ENCODE measurements at regions of chr5 and their contacts with region 1.

Region 1: GRCh38 chr5:150398722-150399523 is 13.8 kb downstream of the CD74 start:
- DNase-seq: peak; percentile 34
- H3K4me3 Mint-ChIP-seq: no peak overlapping the region
- H3K27ac Mint-ChIP-seq: no peak overlapping the region
- H3K4me1 Mint-ChIP-seq: no peaks in the 10 kb centered on the region
- H3K27me3 Mint-ChIP-seq: no peaks in the 10 kb centered on the region

Region 2: DNA sequence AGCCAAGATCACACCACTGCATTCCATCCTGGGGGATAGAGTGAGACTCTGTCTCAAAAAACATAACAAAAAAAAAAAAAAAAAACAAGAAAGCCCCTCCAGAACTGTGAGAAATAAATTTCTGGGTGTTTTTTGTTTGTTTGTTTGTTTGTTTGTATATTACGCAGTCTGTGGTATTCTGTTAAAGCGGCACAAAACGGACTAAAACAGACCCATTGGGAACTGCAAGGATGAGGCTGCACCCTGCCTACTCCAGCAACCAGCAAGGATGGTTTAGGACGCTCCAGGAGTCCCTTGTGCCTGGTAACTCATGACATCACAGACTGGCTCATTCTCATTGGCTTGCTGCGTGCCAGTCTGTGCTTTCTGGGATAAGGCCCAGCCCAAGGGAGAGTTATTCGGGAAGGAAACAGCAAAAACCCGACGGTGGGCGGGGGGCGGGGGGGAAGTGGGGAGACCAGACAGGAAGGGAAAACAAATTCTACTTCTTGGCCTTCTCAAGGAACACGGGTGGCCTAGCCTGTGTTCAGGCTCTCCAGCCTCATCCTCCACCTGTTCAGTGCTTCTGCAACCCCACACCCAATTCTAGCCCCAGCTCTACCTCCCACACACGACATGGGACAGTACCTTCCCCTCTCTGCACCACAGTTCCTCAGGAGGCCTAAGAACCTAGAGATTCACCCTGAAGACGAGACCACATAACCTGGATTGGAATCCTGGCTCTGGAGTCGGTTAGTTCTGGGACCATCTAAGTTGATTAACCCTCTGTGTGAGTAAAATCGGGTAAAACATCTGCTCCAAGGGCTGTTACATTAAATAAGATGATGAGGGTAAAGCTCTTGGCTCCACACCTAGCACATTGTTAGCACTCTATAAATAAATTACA is 11.0 kb after region 1 on chr5:
- CTCF ChIA-PET with region 1: interaction called, 31 read pairs
- DNase-seq: peak; percentile 73
- H3K4me3 Mint-ChIP-seq: peak overlapping the region; percentile 94
- H3K27ac Mint-ChIP-seq: peak overlapping the region; percentile 99
- H3K4me1 Mint-ChIP-seq: peaks cover 46% of the 10 kb centered on the region
- H3K27me3 Mint-ChIP-seq: no peaks in the 10 kb centered on the region

Region 3: GRCh38 chr5:150436141-150436680 is 37.3 kb after region 1 on chr5:
- CTCF ChIA-PET with region 1: interaction called, 17 read pairs
- DNase-seq: peak; percentile 95
- H3K4me3 Mint-ChIP-seq: no peak overlapping the region
- H3K27ac Mint-ChIP-seq: peak overlapping the region; percentile 15
- H3K4me1 Mint-ChIP-seq: peaks cover 15% of the 10 kb centered on the region
- H3K27me3 Mint-ChIP-seq: peaks cover 11% of the 10 kb centered on the region